Left ventricle myocardium inferior (tissue), 1 donor: ENCODE measurements at regions of chr1 and their contacts with region 1.

Region 1: GRCh38 chr1:208132287-208132883 is 111.8 kb downstream of the PLXNA2 start:
- DNase-seq: peak; percentile 84
- H3K4me3 ChIP-seq: no peak overlapping the region
- H3K27ac ChIP-seq: peak overlapping the region; percentile 24
- H3K4me1 ChIP-seq: peaks cover 53% of the 10 kb centered on the region
- H3K27me3 ChIP-seq: no peaks in the 10 kb centered on the region
- CTCF ChIP-seq: peak; percentile 92

Region 2: GRCh38 chr1:208159555-208160258 is 27.3 kb after region 1 on chr1:
- intact Hi-C with region 1: no loop called
- DNase-seq: no peak
- H3K4me3 ChIP-seq: no peak overlapping the region
- H3K27ac ChIP-seq: peak overlapping the region; percentile 73
- H3K4me1 ChIP-seq: peaks cover 90% of the 10 kb centered on the region
- H3K27me3 ChIP-seq: no peaks in the 10 kb centered on the region
- CTCF ChIP-seq: no peak

Region 3: DNA sequence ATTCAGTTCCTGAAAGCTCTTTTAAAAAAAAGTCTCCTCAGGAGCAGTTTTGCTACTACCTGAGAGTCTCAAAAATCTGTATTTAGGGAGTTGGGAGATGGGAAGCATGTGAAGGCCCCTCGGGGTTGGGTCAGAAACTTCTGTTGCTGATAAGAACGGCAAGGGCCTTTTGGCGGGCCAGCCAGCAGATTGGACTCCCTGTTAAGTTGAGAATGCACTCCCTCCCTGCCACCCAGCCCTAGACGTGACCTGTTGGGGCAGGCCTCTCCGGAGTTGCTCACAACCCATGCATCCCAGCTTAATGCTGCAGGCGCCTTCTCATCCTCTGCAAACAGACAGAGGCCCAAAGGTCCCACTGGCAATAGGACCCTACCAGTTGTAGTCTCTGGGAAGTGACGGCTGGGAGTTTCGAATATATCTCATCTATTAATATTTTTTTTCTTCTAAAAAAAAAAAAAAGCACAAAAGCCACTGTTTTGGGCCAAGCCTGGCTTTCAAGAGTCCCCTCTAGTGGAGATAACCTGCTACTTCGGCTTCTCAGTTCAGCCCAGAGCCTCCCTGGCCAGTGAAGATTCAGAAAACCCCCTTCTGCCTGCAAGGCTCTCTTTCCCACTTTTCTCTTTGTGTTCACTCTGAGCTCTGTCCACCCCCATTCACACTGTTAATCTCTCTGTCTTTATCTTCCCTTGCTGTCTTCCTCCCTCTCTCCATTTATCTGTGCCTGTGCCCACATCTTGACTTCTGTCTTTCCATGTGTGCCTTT is 106.5 kb after region 1 on chr1:
- intact Hi-C with region 1: loop called (anchors 5 kb)
- DNase-seq: no peak
- H3K4me3 ChIP-seq: peak overlapping the region; percentile 94
- H3K27ac ChIP-seq: peak overlapping the region; percentile 95
- H3K4me1 ChIP-seq: peaks cover 99% of the 10 kb centered on the region
- H3K27me3 ChIP-seq: no peaks in the 10 kb centered on the region
- CTCF ChIP-seq: peak; percentile 84

Region 4: DNA sequence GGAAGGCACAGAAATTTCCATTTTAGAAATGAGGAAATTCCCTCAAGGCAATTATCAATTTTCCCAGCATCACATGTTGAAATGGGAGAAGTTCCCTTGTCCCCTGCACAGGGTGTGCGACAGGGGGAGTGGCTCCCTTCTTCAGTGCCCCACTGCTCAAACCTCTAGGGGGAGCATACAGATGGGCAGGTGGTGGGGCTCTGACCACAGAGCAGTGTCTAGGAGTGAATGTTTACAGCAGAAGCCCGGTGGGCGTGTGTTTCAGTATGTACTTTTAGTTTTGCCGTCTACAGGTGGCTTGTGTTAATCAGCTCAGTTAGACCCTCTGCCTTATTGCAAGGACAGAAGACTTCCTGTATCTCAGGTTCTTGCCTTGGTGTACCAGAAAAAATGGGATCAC is 605.5 kb after region 1 on chr1:
- intact Hi-C with region 1: no loop called
- DNase-seq: no peak
- H3K4me3 ChIP-seq: no peak overlapping the region
- H3K27ac ChIP-seq: no peak overlapping the region
- H3K4me1 ChIP-seq: no peaks in the 10 kb centered on the region
- H3K27me3 ChIP-seq: no peaks in the 10 kb centered on the region
- CTCF ChIP-seq: no peak